Right cardiac atrium (tissue), 5 donors: ENCODE measurements at regions of chr10 and their contacts with region 1.

Region 1: GRCh38 chr10:35598384-35598783 is 6.8 kb upstream of the GJD4 start:
- DNase-seq: peak in 1 of 3 donors; percentile 61
- ATAC-seq: no peak
- H3K4me3 ChIP-seq: no peak overlapping the region
- H3K27ac ChIP-seq: no peak overlapping the region
- H3K4me1 ChIP-seq: no peaks in the 10 kb centered on the region
- H3K27me3 ChIP-seq: no peaks in the 10 kb centered on the region

Region 2: DNA sequence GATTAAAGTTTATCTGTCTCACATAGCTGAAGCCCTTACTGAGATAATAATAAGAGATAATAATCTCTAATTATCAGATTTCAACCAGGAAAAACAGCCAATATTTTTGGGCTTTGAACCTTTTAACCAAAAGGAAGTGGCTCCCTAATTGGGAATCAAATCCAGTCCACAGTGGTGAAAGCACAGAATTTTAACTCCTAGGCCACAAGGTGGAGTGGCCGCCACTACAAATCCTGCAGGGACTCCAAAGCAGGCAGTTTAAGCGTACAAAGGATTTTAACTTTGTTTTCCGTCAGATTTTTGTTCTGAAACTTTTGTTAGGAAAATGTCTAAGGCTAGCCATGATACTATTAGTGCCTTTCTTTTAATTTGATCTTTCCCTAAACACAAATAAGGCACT is 361.6 kb before region 1 on chr10:
- intact Hi-C with region 1: loop called in 2 of 4 experiments (anchors 10 kb)
- DNase-seq: no peak
- ATAC-seq: no peak
- H3K4me3 ChIP-seq: no peak overlapping the region
- H3K27ac ChIP-seq: no peak overlapping the region
- H3K4me1 ChIP-seq: no peaks in the 10 kb centered on the region
- H3K27me3 ChIP-seq: no peaks in the 10 kb centered on the region

Region 3: GRCh38 chr10:35412900-35413491 is 185.4 kb before region 1 on chr10:
- intact Hi-C with region 1: no loop called
- DNase-seq: no peak
- ATAC-seq: no peak
- H3K4me3 ChIP-seq: no peak overlapping the region
- H3K27ac ChIP-seq: no peak overlapping the region
- H3K4me1 ChIP-seq: peaks cover 40% of the 10 kb centered on the region
- H3K27me3 ChIP-seq: no peaks in the 10 kb centered on the region